ENCODE measurements at regions of chr10 and their contacts with region 1.

Region 1: GRCh38 chr10:100518761-100519241 is 860 bp downstream of the SEC31B start:
- DNase-seq: peak; percentile 75
- H3K4me3 Mint-ChIP-seq: no peak overlapping the region
- H3K27ac Mint-ChIP-seq: peak overlapping the region; percentile 58
- H3K4me1 Mint-ChIP-seq: peaks cover 53% of the 10 kb centered on the region
- H3K27me3 Mint-ChIP-seq: no peaks in the 10 kb centered on the region

Region 2: GRCh38 chr10:100186253-100186780 is 332.5 kb before region 1 on chr10:
- CTCF ChIA-PET with region 1: no interaction called
- POLR2A ChIA-PET with region 1: no interaction called
- DNase-seq: no peak
- H3K4me3 Mint-ChIP-seq: peak overlapping the region; percentile 97
- H3K27ac Mint-ChIP-seq: peak overlapping the region; percentile 97
- H3K4me1 Mint-ChIP-seq: peaks cover 64% of the 10 kb centered on the region
- H3K27me3 Mint-ChIP-seq: no peaks in the 10 kb centered on the region

Region 3: GRCh38 chr10:100338434-100339036 is 180.3 kb before region 1 on chr10:
- CTCF ChIA-PET with region 1: interaction called, 11 read pairs
- POLR2A ChIA-PET with region 1: no interaction called
- DNase-seq: peak; percentile 83
- H3K4me3 Mint-ChIP-seq: no peak overlapping the region
- H3K27ac Mint-ChIP-seq: no peak overlapping the region
- H3K4me1 Mint-ChIP-seq: peaks cover 19% of the 10 kb centered on the region
- H3K27me3 Mint-ChIP-seq: peaks cover 15% of the 10 kb centered on the region

Region 4: DNA sequence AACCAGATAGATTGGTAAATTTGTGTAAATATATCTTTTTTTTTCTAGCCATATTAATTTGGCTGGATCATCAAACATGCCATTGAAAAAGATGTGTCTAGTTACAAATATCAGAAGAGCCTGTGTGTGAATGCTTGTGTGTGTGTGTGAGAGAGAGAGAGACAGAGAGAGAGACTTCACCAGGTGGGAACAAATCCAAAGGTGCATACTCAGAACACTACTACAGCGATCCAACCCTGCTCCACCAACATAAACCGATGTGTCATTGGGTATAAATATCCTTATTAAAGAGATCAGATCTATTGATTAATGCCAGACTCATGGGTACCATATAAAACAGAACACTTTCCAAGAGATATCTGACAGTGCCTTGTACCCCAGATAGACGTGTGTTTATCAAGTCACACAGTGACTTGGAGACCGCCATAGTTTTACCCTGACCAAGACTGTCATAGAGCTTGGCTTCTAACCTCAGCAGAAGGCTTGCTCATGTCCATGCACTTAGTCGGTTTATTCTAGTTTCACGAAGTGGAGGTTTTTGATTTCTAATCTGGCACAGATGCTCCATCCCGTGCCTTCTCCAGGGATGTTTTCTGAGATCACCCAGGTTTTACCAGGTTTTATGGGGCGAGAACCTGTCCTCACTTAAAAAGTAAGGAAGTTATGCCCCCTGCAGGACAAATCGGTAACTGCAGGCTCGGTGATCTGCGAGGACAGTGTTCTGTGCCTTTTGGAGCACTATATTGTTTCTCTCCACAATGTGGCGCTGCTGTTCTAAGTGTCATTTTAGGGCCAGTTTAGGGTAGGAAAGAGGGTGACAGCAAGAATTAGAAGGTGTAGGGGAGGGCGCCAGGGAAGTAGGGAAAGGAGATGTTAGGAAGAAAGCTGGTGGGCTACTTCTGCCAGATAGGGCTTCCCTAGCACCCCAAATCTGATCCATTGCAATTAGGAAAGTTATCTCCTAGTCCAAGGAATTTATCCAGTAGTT is 85.3 kb before region 1 on chr10:
- CTCF ChIA-PET with region 1: interaction called, 69 read pairs
- POLR2A ChIA-PET with region 1: no interaction called
- DNase-seq: peak; percentile 98
- H3K4me3 Mint-ChIP-seq: no peak overlapping the region
- H3K27ac Mint-ChIP-seq: peak overlapping the region; percentile 9
- H3K4me1 Mint-ChIP-seq: peaks cover 14% of the 10 kb centered on the region
- H3K27me3 Mint-ChIP-seq: no peaks in the 10 kb centered on the region

Region 5: GRCh38 chr10:100501423-100501822 is 17.4 kb before region 1 on chr10:
- CTCF ChIA-PET with region 1: interaction called, 10 read pairs
- POLR2A ChIA-PET with region 1: no interaction called
- DNase-seq: no peak
- H3K4me3 Mint-ChIP-seq: no peak overlapping the region
- H3K27ac Mint-ChIP-seq: peak overlapping the region; percentile 22
- H3K4me1 Mint-ChIP-seq: peaks cover 92% of the 10 kb centered on the region
- H3K27me3 Mint-ChIP-seq: no peaks in the 10 kb centered on the region

Region 6: GRCh38 chr10:100535715-100536353 is 17.0 kb after region 1 on chr10 and contains the start of gene HIF1AN:
- CTCF ChIA-PET with region 1: interaction called, 170 read pairs
- POLR2A ChIA-PET with region 1: interaction called, 3 read pairs
- DNase-seq: peak; percentile 93
- H3K4me3 Mint-ChIP-seq: no peak within 1 kb of the TSS
- H3K27ac Mint-ChIP-seq: peak within 1 kb of the TSS; percentile 61
- H3K4me1 Mint-ChIP-seq: peaks cover 12% of the 10 kb centered on the region
- H3K27me3 Mint-ChIP-seq: no peaks in the 10 kb centered on the region
- total RNA-seq, gene HIF1AN: 54.9 to 59.3 TPM

Region 7: DNA sequence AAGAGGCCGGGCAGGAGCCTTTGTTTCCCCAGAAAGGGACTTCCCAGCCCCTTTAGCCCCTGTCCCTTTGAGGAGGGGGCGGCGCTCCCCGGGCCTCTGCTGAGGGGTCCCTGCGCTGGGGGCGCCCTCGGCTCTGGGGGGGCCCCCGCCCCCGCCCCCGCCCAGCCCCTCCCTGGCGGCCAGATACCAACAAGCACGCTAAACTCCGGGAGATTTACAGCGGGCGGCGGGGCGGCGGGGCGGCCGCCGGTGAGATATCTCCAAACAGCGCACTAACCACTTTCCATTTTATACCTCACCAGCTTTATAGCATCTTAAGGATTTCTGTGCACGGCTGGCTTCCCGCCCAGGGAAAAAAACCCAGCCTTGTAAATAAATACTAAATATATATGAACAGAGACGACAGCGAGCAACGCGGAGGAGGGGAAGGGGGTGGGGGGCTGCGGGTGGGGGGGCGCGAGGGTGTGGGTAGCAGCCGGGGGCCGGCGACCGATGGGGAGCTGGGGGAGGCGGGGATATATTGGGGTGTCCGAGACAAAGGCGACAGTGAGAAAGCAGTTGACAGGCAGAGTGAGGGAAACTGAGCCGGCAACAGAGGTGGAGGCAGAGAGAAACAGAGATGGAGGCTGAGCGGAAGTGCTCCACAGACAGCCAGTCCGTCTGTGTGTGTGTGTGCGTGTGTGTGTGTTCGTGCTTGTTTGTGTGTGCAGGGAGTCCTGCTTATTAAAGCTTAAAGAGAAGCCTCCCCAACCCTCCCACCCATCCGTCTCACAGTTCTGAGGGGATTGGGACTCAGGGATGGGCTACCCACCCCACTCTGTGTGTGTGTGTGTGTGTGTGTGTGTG is 102.8 kb after region 1 on chr10:
- CTCF ChIA-PET with region 1: no interaction called
- POLR2A ChIA-PET with region 1: no interaction called
- DNase-seq: peak; percentile 45
- H3K4me3 Mint-ChIP-seq: peak overlapping the region; percentile 35
- H3K27ac Mint-ChIP-seq: no peak overlapping the region
- H3K4me1 Mint-ChIP-seq: no peaks in the 10 kb centered on the region
- H3K27me3 Mint-ChIP-seq: peaks cover 58% of the 10 kb centered on the region

Measured in activated CD4-positive, alpha-beta T cell treated with anti-CD3 and anti-CD28 coated beads, Interleukin-2, amount 10 ng/mL, durations not matched to agents 7 days and 5 days (primary cell).